Activated T-helper 1 cell treated with anti-CD3 and anti-CD28 coated beads, Interleukin-12 subunit alpha, Interleukin-12 subunit beta, Interleukin-2, Interleukin-4 antibody, amounts not matched to agents 30 ng/mL and 10 ng/mL and 1 ng/mL, durations not matched to agents 14 hours and 24 hours and 36 hours (primary cell): ENCODE measurements at regions of chr4 and their contacts with region 1.

Region 1: DNA sequence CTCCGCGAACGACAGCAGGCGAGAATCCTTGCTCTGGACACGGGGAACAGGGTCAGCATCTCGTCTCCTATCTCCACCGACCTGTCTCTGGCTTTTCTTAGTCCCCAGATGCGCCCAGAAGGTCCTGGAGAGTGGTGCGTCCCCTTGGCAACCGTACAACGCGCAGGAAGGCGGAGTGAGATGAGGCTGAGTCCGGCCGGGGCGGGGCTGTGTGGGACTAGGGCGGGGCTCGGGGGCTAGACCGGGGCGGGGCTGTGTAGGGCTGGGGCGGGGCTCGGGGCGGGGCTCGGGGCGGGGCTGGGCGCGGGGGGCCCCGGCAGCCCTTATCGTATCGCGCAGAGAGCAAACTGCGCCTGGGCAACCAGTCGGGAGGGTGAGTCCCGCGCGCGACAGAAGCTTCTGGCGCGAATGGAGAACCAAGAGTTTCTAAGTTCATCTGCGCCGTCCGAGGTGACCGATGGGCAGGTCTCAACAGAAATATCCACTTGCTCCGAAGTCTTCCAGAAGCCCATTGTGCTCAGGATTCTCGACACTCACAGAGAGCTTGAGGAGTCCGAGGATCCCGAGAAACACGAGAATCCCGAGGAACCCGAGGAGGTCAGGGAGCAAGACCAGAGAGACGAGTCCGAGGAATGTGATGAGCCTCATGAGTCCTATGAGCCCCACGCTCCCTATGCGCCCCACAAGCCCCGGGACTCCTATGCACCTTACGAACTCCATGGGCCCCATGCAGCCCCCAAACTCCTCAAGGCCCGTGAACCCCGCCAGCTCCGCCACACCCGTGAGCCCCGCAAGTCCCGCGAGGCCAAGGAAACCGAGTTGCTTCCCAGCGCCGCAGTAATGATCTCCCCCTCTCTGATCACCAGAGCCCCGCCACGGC is 24.9 kb downstream of the ARL9 start:
- DNase-seq: peak; percentile 63
- H3K4me3 Mint-ChIP-seq: peak overlapping the region; percentile 57
- H3K27ac Mint-ChIP-seq: no peak overlapping the region
- H3K4me1 Mint-ChIP-seq: no peaks in the 10 kb centered on the region
- H3K27me3 Mint-ChIP-seq: peaks cover 18% of the 10 kb centered on the region

Region 2: DNA sequence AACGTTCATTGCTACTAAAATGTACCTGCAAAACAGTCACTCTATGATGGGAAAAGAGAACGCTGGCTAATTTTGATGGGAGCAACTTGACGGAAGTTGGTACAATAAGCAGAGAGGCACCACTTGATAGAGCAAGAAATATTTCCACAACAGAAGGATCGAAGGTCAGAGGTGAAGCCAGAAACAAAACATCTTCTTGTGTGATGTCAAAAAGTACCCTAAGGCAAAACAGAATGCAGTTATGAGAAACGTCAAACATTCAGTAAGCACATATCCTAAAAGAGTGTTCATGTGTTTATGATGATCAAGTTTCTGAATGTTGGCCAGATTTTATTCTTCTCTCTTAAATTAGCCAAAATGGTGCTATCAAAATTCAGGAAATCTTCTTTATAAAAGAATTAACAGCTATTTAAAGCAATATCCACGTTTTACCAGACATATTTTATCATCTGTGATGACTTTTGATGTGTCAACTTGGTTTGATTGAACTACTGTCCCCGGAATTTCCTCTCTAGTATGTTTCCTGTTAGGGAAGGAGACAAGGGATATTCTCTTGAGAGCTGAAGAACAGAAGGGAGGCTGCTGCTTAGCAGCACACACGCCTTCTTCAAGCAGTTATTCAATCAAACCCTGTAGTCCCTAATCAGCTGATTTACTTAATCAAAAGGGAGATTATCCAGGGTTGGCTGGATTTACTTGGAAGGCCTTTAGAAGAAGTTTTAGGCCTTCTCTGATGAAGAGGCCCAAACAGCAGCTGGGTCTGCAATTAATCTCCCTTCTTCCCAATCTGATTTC is 158.9 kb before region 1 on chr4:
- intact Hi-C with region 1: no loop called
- DNase-seq: no peak
- H3K4me3 Mint-ChIP-seq: no peak overlapping the region
- H3K27ac Mint-ChIP-seq: no peak overlapping the region
- H3K4me1 Mint-ChIP-seq: no peaks in the 10 kb centered on the region
- H3K27me3 Mint-ChIP-seq: no peaks in the 10 kb centered on the region

Region 3: GRCh38 chr4:56387023-56388001 is 143.2 kb before region 1 on chr4 and contains the start of gene AASDH:
- intact Hi-C with region 1: loop called (anchors 5 kb)
- DNase-seq: peak; percentile 93
- H3K4me3 Mint-ChIP-seq: peak within 1 kb of the TSS; percentile 92
- H3K27ac Mint-ChIP-seq: peak within 1 kb of the TSS; percentile 97
- H3K4me1 Mint-ChIP-seq: peaks cover 26% of the 10 kb centered on the region
- H3K27me3 Mint-ChIP-seq: no peaks in the 10 kb centered on the region
- total RNA-seq, gene AASDH: 9.8 and 12.0 TPM in 2 replicates

Region 4: GRCh38 chr4:56505269-56506130 is 25.0 kb before region 1 on chr4 and contains the start of gene ARL9:
- intact Hi-C with region 1: loop called (anchors 2 kb)
- DNase-seq: peak; percentile 38
- H3K4me3 Mint-ChIP-seq: peak within 1 kb of the TSS; percentile 88
- H3K27ac Mint-ChIP-seq: peak within 1 kb of the TSS; percentile 76
- H3K4me1 Mint-ChIP-seq: peaks cover 20% of the 10 kb centered on the region
- H3K27me3 Mint-ChIP-seq: peaks cover 13% of the 10 kb centered on the region
- total RNA-seq, gene ARL9: 0.13 and 0.32 TPM in 2 replicates

Region 5: GRCh38 chr4:56821381-56822243 is 291.1 kb after region 1 on chr4 and contains the start of gene SPINK2:
- intact Hi-C with region 1: loop called (anchors 2 kb)
- DNase-seq: peak; percentile 44
- H3K4me3 Mint-ChIP-seq: peak within 1 kb of the TSS; percentile 45
- H3K27ac Mint-ChIP-seq: no peak within 1 kb of the TSS
- H3K4me1 Mint-ChIP-seq: peaks cover 29% of the 10 kb centered on the region
- H3K27me3 Mint-ChIP-seq: peaks cover 50% of the 10 kb centered on the region
- total RNA-seq, gene SPINK2: not detected in 2 replicates

Region 6: GRCh38 chr4:56977321-56978012 is 447.0 kb after region 1 on chr4 and contains the start of gene NOA1:
- intact Hi-C with region 1: loop called (anchors 2 kb)
- DNase-seq: peak; percentile 98
- H3K4me3 Mint-ChIP-seq: peak within 1 kb of the TSS; percentile 100
- H3K27ac Mint-ChIP-seq: peak within 1 kb of the TSS; percentile 100
- H3K4me1 Mint-ChIP-seq: peaks cover 51% of the 10 kb centered on the region
- H3K27me3 Mint-ChIP-seq: no peaks in the 10 kb centered on the region
- total RNA-seq, gene NOA1: 17.7 and 18.3 TPM in 2 replicates